ENCODE measurements at regions of chr21 and their contacts with region 1.

Region 1: DNA sequence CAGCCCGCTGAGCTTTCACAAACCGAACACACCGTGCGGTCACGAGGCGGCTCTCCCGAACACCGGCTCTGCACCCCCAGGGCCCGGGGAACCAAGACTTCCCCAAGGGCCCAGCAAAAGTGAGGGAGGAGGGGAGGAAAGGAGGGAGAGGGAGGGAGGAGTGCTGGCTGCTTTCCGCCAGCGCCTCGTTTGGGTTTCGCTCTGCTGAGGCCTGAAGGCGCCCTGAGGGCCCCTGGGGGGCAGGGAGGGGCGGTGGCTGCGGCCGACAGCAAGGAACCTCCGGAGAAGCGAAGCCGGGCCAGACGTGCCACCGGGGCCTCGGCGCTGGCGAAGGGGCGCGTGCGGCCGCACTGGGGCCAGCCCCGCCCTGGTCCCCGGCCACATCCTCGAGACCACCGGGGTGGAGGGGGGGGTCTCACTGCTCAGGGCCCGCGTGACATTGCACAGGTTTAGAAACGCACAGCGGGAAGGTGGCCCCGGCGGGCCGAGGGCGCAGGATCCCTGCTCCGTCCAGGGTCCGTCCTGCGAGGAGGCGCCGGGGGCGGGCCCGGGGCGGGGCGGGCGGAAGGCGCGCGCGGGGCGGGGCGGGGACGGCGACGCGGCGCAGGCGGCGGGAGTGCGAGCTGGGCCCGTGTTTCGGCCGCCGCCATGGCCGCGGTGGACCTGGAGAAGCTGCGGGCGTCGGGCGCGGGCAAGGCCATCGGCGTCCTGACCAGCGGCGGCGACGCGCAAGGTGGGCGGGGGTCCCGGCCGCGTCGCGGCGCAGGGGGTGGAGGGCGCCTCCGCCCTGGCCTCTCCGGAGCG is at the start of gene PFKL:
- DNase-seq: peak; percentile 63 to 85 (median 77)
- H3K4me3 ChIP-seq: peak within 1 kb of the TSS; percentile 60 to 84 (median 77)
- H3K27ac ChIP-seq: peak within 1 kb of the TSS in 1 of 2 experiments; percentile 74
- H3K4me1 ChIP-seq: peaks cover 7 to 70% (median 61%) of the 10 kb centered on the region in 4 experiments
- H3K27me3 ChIP-seq: no peaks in the 10 kb centered on the region

Region 2: GRCh38 chr21:44267655-44268142 is 32.0 kb before region 1 on chr21:
- CTCF ChIA-PET with region 1: interaction called, 16 read pairs
- POLR2A ChIA-PET with region 1: no interaction called
- DNase-seq: peak; percentile 43 to 60 (median 59)
- H3K4me3 ChIP-seq: no peak overlapping the region
- H3K27ac ChIP-seq: no peak overlapping the region
- H3K4me1 ChIP-seq: peaks cover 0 to 2% (median 0%) of the 10 kb centered on the region in 4 experiments
- H3K27me3 ChIP-seq: no peaks in the 10 kb centered on the region

Region 3: GRCh38 chr21:44286833-44287681 is 12.6 kb before region 1 on chr21:
- CTCF ChIA-PET with region 1: interaction called, 10 read pairs
- POLR2A ChIA-PET with region 1: no interaction called
- DNase-seq: no peak
- H3K4me3 ChIP-seq: no peak overlapping the region
- H3K27ac ChIP-seq: no peak overlapping the region
- H3K4me1 ChIP-seq: peaks cover 0 to 22% (median 16%) of the 10 kb centered on the region in 4 experiments
- H3K27me3 ChIP-seq: no peaks in the 10 kb centered on the region

Region 4: DNA sequence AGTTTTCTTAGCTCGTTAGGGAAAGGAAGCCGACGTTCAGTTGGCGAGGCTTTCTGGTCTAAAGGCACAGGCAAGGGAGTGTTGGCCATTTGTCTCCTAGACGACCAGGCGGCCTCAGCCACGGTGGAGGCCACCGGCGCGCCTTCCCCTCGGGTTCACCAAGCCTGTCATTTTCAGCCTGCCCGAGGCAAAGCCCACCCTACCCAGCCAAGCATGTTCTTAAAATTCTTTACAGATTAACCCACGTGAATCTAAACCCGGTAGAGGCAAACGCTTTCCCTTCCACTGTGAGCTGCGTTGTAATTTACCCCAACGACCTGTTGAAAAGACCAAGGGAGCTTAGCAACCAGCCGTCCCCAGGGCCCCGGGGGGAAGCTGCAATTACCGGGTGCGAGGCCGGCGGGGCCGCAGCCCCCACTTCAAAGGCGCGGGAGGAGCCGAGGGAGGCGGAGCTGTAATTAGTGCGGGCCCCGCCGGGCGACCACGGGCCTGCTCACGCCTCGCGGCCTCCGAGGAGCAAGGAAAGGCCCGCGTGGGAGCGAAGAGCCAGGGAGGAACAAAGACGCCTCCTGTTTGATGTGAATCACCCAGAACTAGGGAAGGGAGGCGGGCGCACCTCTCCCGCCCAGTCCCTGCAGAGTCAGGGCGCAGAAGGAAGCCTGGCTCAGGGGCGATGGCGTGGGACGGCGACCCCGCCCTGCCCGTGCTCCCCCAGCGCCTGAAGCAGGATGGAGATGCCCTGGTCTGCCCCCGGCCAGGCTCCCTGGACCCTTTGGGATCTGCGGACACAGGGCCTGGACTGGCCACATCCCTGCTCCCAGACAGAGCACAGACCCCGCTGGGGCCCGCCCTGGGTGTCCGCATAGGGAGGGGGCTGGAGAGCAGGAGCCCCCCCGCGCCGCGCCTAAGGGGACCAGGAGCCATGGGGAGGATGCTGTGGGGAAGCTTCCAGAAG is 423.8 kb after region 1 on chr21:
- CTCF ChIA-PET with region 1: no interaction called
- POLR2A ChIA-PET with region 1: no interaction called
- DNase-seq: peak in 2 of 3 donors; percentile 34 to 40
- H3K4me3 ChIP-seq: peak overlapping the region in 1 of 7 experiments; percentile 32
- H3K27ac ChIP-seq: no peak overlapping the region
- H3K4me1 ChIP-seq: peaks cover 0 to 10% (median 4%) of the 10 kb centered on the region in 4 experiments
- H3K27me3 ChIP-seq: peaks cover 16 to 92% (median 39%) of the 10 kb centered on the region in 5 experiments

Measured in common myeloid progenitor, CD34-positive (primary cell).